ENCODE measurements at regions of chr20 and their contacts with region 1.

Region 1: GRCh38 chr20:44187051-44187762 is at the start of gene JPH2:
- DNase-seq: no peak
- ATAC-seq: peak; percentile 36
- H3K4me3 ChIP-seq: peak within 1 kb of the TSS; percentile 16 to 30; a peak in 3 of 4 replicates
- H3K27ac ChIP-seq: no peak within 1 kb of the TSS
- H3K4me1 ChIP-seq: peaks cover 16 to 22% of the 10 kb centered on the region in 2 experiments
- H3K27me3 ChIP-seq: no peaks in the 10 kb centered on the region
- CTCF ChIP-seq: no peak
- POLR2A ChIP-seq: no peak
- RAD21 ChIP-seq: no peak
- total RNA-seq, gene JPH2: 0.17 TPM

Region 2: GRCh38 chr20:43603136-43603535 is 584.1 kb before region 1 on chr20:
- CTCF ChIA-PET with region 1: no interaction called
- POLR2A ChIA-PET with region 1: no interaction called
- RAD21 ChIA-PET with region 1: no interaction called
- intact Hi-C with region 1: no loop called
- DNase-seq: no peak
- ATAC-seq: no peak
- H3K4me3 ChIP-seq: no peak overlapping the region
- H3K27ac ChIP-seq: no peak overlapping the region
- H3K4me1 ChIP-seq: no peaks in the 10 kb centered on the region
- H3K27me3 ChIP-seq: no peaks in the 10 kb centered on the region
- CTCF ChIP-seq: no peak
- POLR2A ChIP-seq: no peak
- RAD21 ChIP-seq: no peak

Region 3: DNA sequence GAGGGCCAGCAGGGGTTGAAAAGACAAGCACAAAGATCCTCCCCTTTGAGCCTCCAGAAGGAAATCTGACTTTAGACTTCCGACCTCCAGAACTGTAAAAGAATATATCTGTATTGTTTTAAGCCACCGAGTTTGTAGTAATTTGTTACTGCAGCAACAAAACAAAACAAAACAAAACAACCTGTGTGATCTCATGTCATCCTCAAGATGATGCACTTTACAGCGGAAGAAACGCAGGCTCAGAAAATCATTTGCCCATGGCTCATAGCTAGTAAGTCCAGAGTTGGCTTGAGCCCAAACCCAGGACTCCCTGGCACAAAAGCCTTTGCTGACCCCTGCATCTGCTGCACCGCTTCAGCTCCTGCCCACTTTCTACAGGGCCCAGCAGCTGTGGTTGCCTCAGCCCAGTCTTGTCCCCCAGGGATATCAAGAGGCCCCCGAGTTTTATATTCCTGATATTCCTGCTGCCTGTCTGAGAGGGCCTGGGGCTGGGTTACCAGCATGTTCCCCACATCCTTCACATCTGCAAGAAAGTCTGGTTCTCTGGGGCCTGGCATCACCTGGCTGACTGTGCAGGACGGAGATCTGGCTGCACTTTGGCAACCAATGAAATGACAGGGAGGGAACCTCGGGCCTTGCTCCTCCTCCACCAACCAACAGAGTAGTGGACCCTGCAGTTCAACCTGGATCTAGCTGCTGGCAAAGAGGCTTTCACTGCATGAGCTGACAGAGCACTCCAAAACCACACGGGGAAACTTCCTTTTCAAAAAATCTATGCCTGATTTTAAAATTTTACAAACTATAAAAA is 57.1 kb before region 1 on chr20:
- CTCF ChIA-PET with region 1: interaction called, 24 read pairs
- POLR2A ChIA-PET with region 1: no interaction called
- RAD21 ChIA-PET with region 1: no interaction called
- intact Hi-C with region 1: no loop called
- DNase-seq: no peak
- ATAC-seq: no peak
- H3K4me3 ChIP-seq: no peak overlapping the region
- H3K27ac ChIP-seq: no peak overlapping the region
- H3K4me1 ChIP-seq: no peaks in the 10 kb centered on the region
- H3K27me3 ChIP-seq: no peaks in the 10 kb centered on the region
- CTCF ChIP-seq: no peak
- POLR2A ChIP-seq: no peak
- RAD21 ChIP-seq: no peak

Region 4: GRCh38 chr20:44176833-44177534 is 10.2 kb before region 1 on chr20:
- CTCF ChIA-PET with region 1: interaction called, 11 read pairs
- POLR2A ChIA-PET with region 1: no interaction called
- RAD21 ChIA-PET with region 1: interaction called in 1 of 2 experiments, 3 read pairs
- intact Hi-C with region 1: no loop called
- DNase-seq: no peak
- ATAC-seq: no peak
- H3K4me3 ChIP-seq: no peak overlapping the region
- H3K27ac ChIP-seq: no peak overlapping the region
- H3K4me1 ChIP-seq: no peaks in the 10 kb centered on the region
- H3K27me3 ChIP-seq: no peaks in the 10 kb centered on the region
- CTCF ChIP-seq: no peak
- POLR2A ChIP-seq: no peak
- RAD21 ChIP-seq: no peak

Region 5: DNA sequence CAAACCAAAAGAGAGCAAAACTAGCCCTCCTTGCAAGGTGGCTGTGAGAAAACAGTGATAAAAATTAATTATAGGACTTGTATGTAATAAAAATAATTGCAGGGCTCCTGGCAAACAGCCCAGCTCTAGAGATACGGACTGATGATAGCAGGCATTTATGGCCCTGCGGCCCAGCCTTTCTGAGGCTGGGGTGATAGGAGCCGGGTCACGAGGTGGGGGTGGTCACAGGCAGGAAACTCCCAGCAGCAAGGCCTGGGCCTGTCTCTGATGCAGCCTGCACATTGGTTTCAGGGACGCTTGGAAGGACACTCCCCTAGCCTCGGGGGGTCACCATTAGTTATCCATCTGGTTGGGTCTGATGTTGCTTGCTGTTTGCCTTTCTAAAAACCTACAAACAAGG is 269.8 kb after region 1 on chr20:
- CTCF ChIA-PET with region 1: no interaction called
- POLR2A ChIA-PET with region 1: no interaction called
- RAD21 ChIA-PET with region 1: no interaction called
- intact Hi-C with region 1: no loop called
- DNase-seq: no peak
- ATAC-seq: no peak
- H3K4me3 ChIP-seq: no peak overlapping the region
- H3K27ac ChIP-seq: no peak overlapping the region
- H3K4me1 ChIP-seq: no peaks in the 10 kb centered on the region
- H3K27me3 ChIP-seq: no peaks in the 10 kb centered on the region
- CTCF ChIP-seq: no peak
- POLR2A ChIP-seq: no peak
- RAD21 ChIP-seq: no peak

Measured in HCT116 (cell line).